Activated CD8-positive, alpha-beta memory T cell treated with anti-CD3 and anti-CD28 coated beads, Interleukin-2, amount 10 ng/mL, durations not matched to agents 7 days and 5 days (primary cell): ENCODE measurements at regions of chr5 and their contacts with region 1.

Region 1: DNA sequence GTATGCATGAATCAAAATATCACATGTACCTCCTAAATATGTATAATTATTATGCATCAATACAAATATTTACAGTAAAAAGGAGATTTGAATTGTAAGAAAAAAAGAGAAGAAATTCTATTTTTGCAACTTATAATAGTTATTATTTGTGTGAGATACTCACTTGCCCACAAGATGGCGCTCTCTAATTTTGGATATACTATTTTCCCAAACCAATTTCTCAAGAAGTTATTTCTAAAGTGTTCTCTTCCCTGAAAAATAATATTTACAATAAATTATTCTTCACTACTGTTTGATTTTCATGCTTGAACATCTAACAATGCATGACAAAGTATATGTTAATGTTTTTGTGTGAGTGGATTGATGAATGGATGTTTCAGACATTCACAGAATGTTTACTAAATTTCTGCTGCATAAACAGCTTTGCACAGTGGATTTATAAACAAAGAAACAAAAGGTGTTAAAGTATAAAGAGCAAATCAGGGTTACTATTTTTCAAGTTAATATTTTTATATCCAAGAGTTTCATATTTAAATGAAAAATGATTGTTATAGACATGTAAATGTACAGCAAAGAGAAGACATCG is 503.4 kb downstream of the PDE4D start:
- DNase-seq: no peak
- ATAC-seq: no peak
- H3K4me3 Mint-ChIP-seq: no peak overlapping the region
- H3K27ac Mint-ChIP-seq: no peak overlapping the region
- H3K4me1 Mint-ChIP-seq: no peaks in the 10 kb centered on the region
- H3K27me3 Mint-ChIP-seq: peaks cover 30% of the 10 kb centered on the region

Region 2: GRCh38 chr5:59445741-59446140 is 55.6 kb after region 1 on chr5:
- CTCF ChIA-PET with region 1: no interaction called
- DNase-seq: no peak
- ATAC-seq: no peak
- H3K4me3 Mint-ChIP-seq: no peak overlapping the region
- H3K27ac Mint-ChIP-seq: no peak overlapping the region
- H3K4me1 Mint-ChIP-seq: no peaks in the 10 kb centered on the region
- H3K27me3 Mint-ChIP-seq: no peaks in the 10 kb centered on the region

Region 3: GRCh38 chr5:59799668-59800346 is 409.6 kb after region 1 on chr5:
- CTCF ChIA-PET with region 1: interaction called, 22 read pairs
- DNase-seq: no peak
- ATAC-seq: peak; percentile 60
- H3K4me3 Mint-ChIP-seq: no peak overlapping the region
- H3K27ac Mint-ChIP-seq: no peak overlapping the region
- H3K4me1 Mint-ChIP-seq: no peaks in the 10 kb centered on the region
- H3K27me3 Mint-ChIP-seq: peaks cover 18% of the 10 kb centered on the region